ENCODE measurements at regions of chr11 and their contacts with region 1.

Region 1: GRCh38 chr11:17846852-17847453 is 112.4 kb downstream of the KCNC1 start:
- DNase-seq: peak; percentile 42 to 73
- ATAC-seq: peak; percentile 86 to 88
- H3K4me3 ChIP-seq: no peak overlapping the region
- H3K27ac ChIP-seq: peak overlapping the region; percentile 44 to 62 (median 51)
- H3K4me1 ChIP-seq: peaks cover 29 to 38% of the 10 kb centered on the region in 2 donors
- H3K27me3 ChIP-seq: no peaks in the 10 kb centered on the region
- CTCF ChIP-seq: peak; percentile 40 to 68 (median 61)
- POLR2A ChIP-seq: peak in 1 of 2 donors; percentile 30

Region 2: GRCh38 chr11:17760102-17761029 is 86.6 kb before region 1 on chr11:
- in situ Hi-C with region 1: no loop called
- intact Hi-C with region 1: loop called (anchors 1 kb)
- DNase-seq: peak in 1 of 2 donors; percentile 69
- ATAC-seq: peak; percentile 81 to 83
- H3K4me3 ChIP-seq: no peak overlapping the region
- H3K27ac ChIP-seq: no peak overlapping the region
- H3K4me1 ChIP-seq: no peaks in the 10 kb centered on the region
- H3K27me3 ChIP-seq: no peaks in the 10 kb centered on the region
- CTCF ChIP-seq: peak; percentile 63 to 76 (median 69)
- POLR2A ChIP-seq: no peak

Region 3: DNA sequence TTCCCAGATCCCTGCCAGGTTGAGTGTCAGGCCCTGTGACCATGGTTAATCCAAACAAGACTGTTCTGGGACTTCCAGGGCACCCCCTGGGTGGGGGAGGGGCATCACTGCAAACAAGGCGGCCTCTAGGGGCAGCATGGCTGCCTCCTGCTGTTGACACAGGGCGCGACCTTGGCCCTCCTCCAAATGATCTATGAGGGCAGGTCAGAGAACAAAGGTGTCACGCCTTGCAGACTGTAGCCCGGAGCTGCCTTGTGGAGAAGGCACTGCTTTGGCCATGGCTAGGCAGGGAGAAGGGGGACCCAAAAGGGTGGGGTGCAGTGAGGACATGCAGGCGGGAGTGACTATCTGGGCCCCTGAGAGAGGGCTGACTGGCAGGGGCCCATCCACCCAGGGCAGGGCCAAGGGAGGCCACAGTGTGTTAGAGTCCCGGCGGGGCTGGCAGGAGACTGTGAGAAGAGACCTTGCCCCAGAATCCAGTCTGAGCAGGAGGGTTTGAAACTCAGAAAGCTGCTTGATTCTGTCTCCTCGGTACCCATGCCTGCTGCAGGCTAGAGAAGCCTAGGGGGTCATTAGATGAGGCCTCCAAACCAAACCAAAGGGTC is 76.8 kb before region 1 on chr11:
- in situ Hi-C with region 1: no loop called
- intact Hi-C with region 1: loop called (anchors 2 kb)
- DNase-seq: no peak
- ATAC-seq: no peak
- H3K4me3 ChIP-seq: no peak overlapping the region
- H3K27ac ChIP-seq: no peak overlapping the region
- H3K4me1 ChIP-seq: no peaks in the 10 kb centered on the region
- H3K27me3 ChIP-seq: no peaks in the 10 kb centered on the region
- CTCF ChIP-seq: no peak
- POLR2A ChIP-seq: no peak

Region 4: GRCh38 chr11:17890325-17890724 is 43.4 kb after region 1 on chr11:
- in situ Hi-C with region 1: no loop called
- intact Hi-C with region 1: no loop called
- DNase-seq: no peak
- ATAC-seq: no peak
- H3K4me3 ChIP-seq: no peak overlapping the region
- H3K27ac ChIP-seq: no peak overlapping the region
- H3K4me1 ChIP-seq: no peaks in the 10 kb centered on the region
- H3K27me3 ChIP-seq: no peaks in the 10 kb centered on the region
- CTCF ChIP-seq: no peak
- POLR2A ChIP-seq: no peak

Measured in gastrocnemius medialis (tissue), 4 donors.